Activated T-helper 1 cell treated with anti-CD3 and anti-CD28 coated beads, Interleukin-12 subunit alpha, Interleukin-12 subunit beta, Interleukin-2, Interleukin-4 antibody, amounts not matched to agents 30 ng/mL and 10 ng/mL and 1 ng/mL, durations not matched to agents 14 hours and 24 hours and 36 hours (primary cell): ENCODE measurements at regions of chr3 and their contacts with region 1.

Region 1: GRCh38 chr3:49786241-49786958 is at the start of gene IP6K1:
- DNase-seq: peak; percentile 100
- H3K4me3 Mint-ChIP-seq: peak within 1 kb of the TSS; percentile 92
- H3K27ac Mint-ChIP-seq: peak within 1 kb of the TSS; percentile 94
- H3K4me1 Mint-ChIP-seq: peaks cover 26% of the 10 kb centered on the region
- H3K27me3 Mint-ChIP-seq: peaks cover 8% of the 10 kb centered on the region
- total RNA-seq, gene IP6K1: 49.3 and 52.4 TPM in 2 replicates

Region 2: DNA sequence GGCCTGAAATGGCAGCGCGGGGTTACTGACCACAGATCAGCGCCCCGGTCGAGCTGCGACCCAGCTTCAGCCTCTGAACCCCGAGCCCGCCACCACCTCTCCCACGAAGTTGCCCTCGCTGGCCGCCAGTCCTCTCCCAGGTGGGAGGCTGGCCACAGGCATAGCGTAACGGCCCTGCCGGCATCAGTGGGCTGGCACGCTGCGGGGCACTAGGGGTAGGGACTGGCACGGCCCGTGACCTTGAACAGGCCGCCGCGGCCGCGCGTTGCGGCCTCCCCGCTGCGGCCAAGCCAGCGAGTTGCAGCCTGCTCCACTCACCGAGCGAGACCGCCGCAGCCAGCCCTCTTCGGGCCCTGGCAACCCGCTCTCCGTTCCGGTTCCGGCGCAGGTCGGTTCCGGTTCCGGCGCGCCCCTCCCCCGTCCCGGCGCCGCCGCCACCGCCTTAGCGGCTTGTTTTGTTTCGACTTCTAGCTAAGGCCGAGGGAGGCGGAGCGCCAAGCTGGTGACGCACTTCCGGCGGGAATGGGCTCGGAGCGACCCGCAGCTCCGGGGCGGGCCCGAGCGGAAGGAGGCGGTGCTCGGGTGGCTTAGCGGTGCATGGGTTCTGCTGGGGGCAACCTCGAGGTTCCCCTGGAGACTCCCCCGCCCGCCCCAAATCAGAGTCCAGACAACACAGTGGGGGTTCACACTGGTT is 665.8 kb before region 1 on chr3 and contains the start of gene USP19:
- intact Hi-C with region 1: loop called (anchors 10 kb)
- DNase-seq: peak; percentile 94
- H3K4me3 Mint-ChIP-seq: peak within 1 kb of the TSS; percentile 90
- H3K27ac Mint-ChIP-seq: peak within 1 kb of the TSS; percentile 88
- H3K4me1 Mint-ChIP-seq: peaks cover 10% of the 10 kb centered on the region
- H3K27me3 Mint-ChIP-seq: peaks cover 1% of the 10 kb centered on the region
- total RNA-seq, gene USP19: 57.7 and 59.7 TPM in 2 replicates

Region 3: DNA sequence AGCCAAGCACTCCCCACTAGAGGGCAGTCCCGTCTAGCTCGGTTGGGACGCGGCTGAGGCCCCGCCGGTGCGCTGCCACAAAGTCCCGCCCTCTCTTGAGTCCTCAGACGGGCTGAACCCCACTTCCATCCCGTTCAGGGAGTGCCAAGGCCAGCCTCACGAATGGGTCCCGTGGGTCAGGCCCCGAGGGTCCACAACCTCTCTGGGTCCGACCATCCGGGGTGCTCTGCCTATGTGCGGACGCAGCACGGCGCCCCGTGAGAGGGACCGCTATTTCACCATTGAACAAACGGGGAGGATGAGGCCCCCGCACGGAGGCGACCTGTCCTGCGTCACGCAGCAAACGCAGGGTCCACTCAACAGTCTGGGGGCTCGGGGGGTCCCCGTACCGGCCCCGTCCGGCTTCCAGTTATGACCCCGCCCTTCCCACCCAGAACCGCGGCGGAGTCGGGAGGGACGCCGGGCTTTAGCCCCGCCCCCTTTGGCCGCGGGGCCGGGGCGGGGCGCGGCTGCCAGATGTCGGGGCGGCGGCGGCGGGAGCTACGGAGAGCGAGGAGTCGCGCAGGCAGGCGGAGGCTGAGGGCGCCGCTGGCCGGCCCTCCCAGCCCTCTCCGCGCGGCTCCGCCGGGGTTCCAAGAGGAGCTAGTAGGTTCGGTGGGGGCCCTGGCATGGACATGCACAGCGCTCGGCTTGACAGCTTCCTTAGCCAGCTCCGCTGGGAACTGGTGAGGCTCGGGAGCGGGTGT is 16.5 kb after region 1 on chr3 and contains the start of gene INKA1:
- intact Hi-C with region 1: loop called (anchors 1 kb)
- DNase-seq: peak; percentile 82
- H3K4me3 Mint-ChIP-seq: peak within 1 kb of the TSS; percentile 84
- H3K27ac Mint-ChIP-seq: peak within 1 kb of the TSS; percentile 70
- H3K4me1 Mint-ChIP-seq: peaks cover 23% of the 10 kb centered on the region
- H3K27me3 Mint-ChIP-seq: peaks cover 10% of the 10 kb centered on the region
- total RNA-seq, gene INKA1: 1.3 and 2.7 TPM in 2 replicates

Region 4: GRCh38 chr3:49813497-49814174 is 27.2 kb after region 1 on chr3 and contains the start of gene UBA7:
- intact Hi-C with region 1: no loop called
- DNase-seq: peak; percentile 40
- H3K4me3 Mint-ChIP-seq: peak within 1 kb of the TSS; percentile 94
- H3K27ac Mint-ChIP-seq: peak within 1 kb of the TSS; percentile 94
- H3K4me1 Mint-ChIP-seq: peaks cover 27% of the 10 kb centered on the region
- H3K27me3 Mint-ChIP-seq: no peaks in the 10 kb centered on the region
- total RNA-seq, gene UBA7: 90.3 and 97.5 TPM in 2 replicates

Region 5: DNA sequence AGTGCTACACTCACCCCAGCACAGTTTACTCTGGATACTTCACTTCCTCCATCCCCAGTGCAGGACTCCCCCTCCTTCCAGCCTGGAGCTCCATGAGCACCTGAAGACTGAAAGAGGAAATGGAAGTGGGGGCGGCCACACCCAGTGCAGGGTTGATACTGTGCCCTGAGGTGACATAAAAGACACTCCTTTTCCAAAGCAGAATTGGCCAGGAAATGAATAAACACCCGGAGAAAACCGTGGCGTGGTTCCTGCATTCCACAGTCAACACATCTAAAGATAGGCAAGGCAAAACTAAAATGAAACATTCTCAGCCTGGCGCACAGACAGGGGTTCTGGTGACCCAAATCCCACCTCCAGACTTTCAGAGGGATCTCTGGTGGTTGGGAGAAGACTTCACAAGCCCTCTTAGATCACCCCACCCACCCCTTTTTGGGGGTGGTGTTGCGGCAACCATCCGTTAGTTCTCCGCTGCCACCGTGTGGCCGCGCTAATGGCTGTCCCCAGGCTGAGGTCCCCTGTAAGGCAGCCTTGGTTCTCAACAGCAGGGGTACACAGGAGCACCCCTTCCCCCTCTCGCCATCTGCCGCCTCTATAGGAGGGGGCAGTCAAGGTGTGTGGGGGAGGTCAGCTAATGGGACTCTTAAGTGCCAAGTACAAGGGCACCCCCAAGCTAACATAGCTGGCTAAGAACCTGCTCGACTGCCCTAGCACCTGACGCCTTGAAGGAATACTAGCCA is 119.8 kb after region 1 on chr3:
- intact Hi-C with region 1: loop called (anchors 5 kb)
- DNase-seq: peak; percentile 29
- H3K4me3 Mint-ChIP-seq: peak overlapping the region; percentile 16
- H3K27ac Mint-ChIP-seq: peak overlapping the region; percentile 57
- H3K4me1 Mint-ChIP-seq: peaks cover 32% of the 10 kb centered on the region
- H3K27me3 Mint-ChIP-seq: no peaks in the 10 kb centered on the region

Region 6: GRCh38 chr3:49939858-49940666 is 153.7 kb after region 1 on chr3 and contains the start of gene RBM6:
- intact Hi-C with region 1: loop called (anchors 1 kb)
- DNase-seq: peak; percentile 95
- H3K4me3 Mint-ChIP-seq: peak within 1 kb of the TSS; percentile 97
- H3K27ac Mint-ChIP-seq: peak within 1 kb of the TSS; percentile 98
- H3K4me1 Mint-ChIP-seq: peaks cover 22% of the 10 kb centered on the region
- H3K27me3 Mint-ChIP-seq: no peaks in the 10 kb centered on the region
- total RNA-seq, gene RBM6: 99.0 and 100 TPM in 2 replicates

Region 7: DNA sequence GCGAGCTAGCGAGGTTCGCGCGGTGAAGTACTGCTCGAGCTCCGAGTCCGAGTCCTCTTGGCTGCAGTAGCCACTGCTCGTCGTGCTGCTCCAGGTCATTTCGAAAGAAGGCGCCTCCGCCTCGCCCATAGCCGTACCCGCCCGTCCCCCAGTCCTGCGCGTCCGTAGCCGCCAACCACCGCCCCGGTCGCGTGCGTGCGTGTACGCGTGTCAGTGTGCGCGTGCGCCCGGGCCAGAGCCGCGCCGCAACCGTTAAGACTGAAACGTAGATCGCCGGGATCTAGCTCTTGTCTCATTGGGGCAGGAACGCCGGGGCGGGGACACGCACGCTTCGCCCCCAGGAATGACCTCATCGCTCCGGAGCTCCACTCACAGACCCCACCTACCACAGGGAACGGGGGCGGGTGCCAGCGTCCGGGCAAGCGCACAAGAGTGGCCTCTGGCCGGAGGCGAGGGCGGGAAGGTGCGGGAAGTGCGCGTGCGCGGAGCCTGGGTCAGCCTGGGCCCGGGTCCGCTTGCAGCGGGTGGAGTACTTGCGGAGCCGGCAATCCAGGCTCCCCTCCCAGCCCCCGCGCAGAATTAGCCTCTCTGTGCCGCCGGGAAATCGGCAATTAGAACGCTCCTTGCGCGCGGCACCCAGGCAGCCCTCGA is 550.9 kb after region 1 on chr3:
- intact Hi-C with region 1: loop called (anchors 1 kb)
- DNase-seq: peak; percentile 96
- H3K4me3 Mint-ChIP-seq: peak overlapping the region; percentile 96
- H3K27ac Mint-ChIP-seq: peak overlapping the region; percentile 97
- H3K4me1 Mint-ChIP-seq: peaks cover 51% of the 10 kb centered on the region
- H3K27me3 Mint-ChIP-seq: no peaks in the 10 kb centered on the region